ENCODE measurements at regions of chr4 and their contacts with region 1.

Region 1: DNA sequence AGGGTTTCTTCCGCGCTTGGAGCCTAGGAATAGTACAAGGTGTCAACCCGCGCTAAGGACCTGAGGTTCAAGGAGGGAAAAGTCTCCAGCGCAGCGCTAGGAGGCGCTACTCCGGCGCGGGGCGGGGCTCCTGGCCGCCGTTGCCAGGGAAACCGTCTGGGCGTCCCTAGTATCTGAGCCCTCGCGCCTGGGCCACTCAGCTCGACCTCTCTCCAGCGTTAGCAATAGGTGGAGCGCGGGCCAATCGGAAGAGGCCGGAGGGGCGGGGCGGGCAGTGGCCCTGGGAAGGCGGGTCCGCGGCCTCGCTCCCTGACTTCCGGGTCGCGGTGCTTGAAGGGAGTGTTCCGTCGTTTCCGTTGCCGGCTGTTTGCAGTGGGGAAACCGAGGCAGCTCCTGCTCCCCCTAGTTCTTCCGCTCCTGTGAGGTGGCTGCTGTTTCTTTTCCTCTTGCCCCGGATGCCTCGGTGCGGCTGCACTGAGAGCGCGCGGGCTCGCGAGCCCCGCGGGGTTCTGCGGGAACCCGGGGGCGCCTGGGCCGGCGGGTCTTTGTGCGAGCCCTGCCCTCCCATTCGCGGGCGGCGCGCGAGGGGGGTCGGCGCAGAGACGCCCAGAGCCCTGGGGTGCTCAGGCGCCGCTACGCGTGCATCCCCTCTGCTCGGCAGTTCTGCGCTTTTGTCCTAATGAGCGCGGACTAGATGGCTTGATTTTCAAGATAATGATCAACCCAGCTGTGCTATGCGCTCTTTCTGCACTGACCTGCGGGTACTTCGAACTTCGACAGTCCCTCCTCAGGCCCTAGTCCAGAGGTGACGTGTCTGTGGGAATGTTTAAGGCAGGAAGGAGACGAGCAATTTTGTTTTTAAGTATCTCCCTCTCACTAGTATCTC is at the start of gene ELMOD2:
- DNase-seq: peak; percentile 95 to 98 (median 97)
- ATAC-seq: peak; percentile 100
- H3K4me3 ChIP-seq: peak within 1 kb of the TSS; percentile 70
- H3K4me3 Mint-ChIP-seq: peak within 1 kb of the TSS; percentile 78 to 95 (median 88)
- H3K27ac ChIP-seq: peak within 1 kb of the TSS; percentile 71
- H3K27ac Mint-ChIP-seq: peak within 1 kb of the TSS; percentile 78 to 93 (median 86)
- H3K4me1 ChIP-seq: peaks cover 12 to 18% of the 10 kb centered on the region in 2 donors
- H3K4me1 Mint-ChIP-seq: peaks cover 8 to 39% (median 29%) of the 10 kb centered on the region in 7 donors
- H3K27me3 ChIP-seq: no peaks in the 10 kb centered on the region
- H3K27me3 Mint-ChIP-seq: peaks cover 0 to 3% (median 0%) of the 10 kb centered on the region in 5 donors
- total RNA-seq, gene ELMOD2: 12.8 to 29.2 (median 17.7) TPM

Region 2: GRCh38 chr4:139177868-139178611 is 1346.1 kb before region 1 on chr4:
- CTCF ChIA-PET with region 1: no interaction called
- POLR2A ChIA-PET with region 1: no interaction called
- intact Hi-C with region 1: loop called (anchors 1 to 2 kb)
- DNase-seq: peak; percentile 84 to 98 (median 92)
- ATAC-seq: peak; percentile 84
- H3K4me3 ChIP-seq: peak overlapping the region; percentile 71
- H3K4me3 Mint-ChIP-seq: peak overlapping the region; percentile 86 to 95 (median 91)
- H3K27ac ChIP-seq: peak overlapping the region; percentile 86
- H3K27ac Mint-ChIP-seq: peak overlapping the region; percentile 90 to 97 (median 94)
- H3K4me1 ChIP-seq: peaks cover 0 to 11% of the 10 kb centered on the region in 2 donors
- H3K4me1 Mint-ChIP-seq: peaks cover 0 to 31% (median 17%) of the 10 kb centered on the region in 7 donors
- H3K27me3 ChIP-seq: no peaks in the 10 kb centered on the region
- H3K27me3 Mint-ChIP-seq: peaks cover 0 to 44% (median 0%) of the 10 kb centered on the region in 5 donors

Region 3: DNA sequence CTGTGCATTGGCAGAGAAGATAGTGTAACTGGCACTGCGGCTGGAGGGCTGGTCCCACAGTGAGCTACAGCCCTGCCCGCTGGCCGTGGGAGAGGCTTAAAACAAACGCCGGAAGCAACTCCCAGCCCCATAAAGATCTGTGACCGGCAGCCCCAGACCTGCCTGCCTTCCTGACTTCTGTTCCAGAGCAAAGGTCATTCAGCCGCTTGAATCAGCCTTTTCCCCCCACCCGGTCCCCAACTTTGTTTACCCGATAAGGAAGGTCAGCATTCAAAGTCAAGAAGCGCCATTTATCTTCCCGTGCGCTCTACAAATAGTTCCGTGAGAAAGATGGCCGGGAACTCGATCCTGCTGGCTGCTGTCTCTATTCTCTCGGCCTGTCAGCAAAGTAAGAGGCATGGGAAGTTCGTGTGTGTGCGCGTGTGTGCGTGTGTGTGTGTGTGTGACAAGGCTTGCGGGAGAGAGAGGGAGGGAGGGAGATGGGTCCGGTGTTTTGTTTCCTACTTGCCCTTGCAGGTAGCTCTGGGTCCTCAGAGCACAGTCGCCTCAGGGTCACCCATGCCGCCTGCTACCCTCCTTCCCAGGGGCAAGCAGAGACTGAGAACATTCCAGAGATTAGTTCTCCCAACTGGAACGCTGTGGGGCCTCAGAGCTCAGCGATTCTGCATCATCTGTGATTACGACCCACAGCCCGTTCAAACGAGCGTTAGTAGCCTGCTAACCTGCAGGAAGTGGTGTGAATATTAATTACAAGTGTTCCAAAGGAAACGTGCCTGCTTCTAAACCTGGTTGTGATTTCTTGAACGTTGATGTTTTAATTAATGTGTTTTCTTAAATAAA is 858.2 kb before region 1 on chr4 and contains the start of gene MGST2:
- CTCF ChIA-PET with region 1: no interaction called
- POLR2A ChIA-PET with region 1: no interaction called
- intact Hi-C with region 1: loop called in 1 of 2 experiments (anchors 5 kb)
- DNase-seq: peak in 5 of 9 donors; percentile 17 to 51 (median 27)
- ATAC-seq: peak; percentile 61
- H3K4me3 ChIP-seq: peak within 1 kb of the TSS; percentile 64
- H3K4me3 Mint-ChIP-seq: peak within 1 kb of the TSS; percentile 90 to 99 (median 94)
- H3K27ac ChIP-seq: peak within 1 kb of the TSS; percentile 42
- H3K27ac Mint-ChIP-seq: peak within 1 kb of the TSS; percentile 49 to 95 (median 88)
- H3K4me1 ChIP-seq: peaks cover 0 to 9% of the 10 kb centered on the region in 2 donors
- H3K4me1 Mint-ChIP-seq: peaks cover 15 to 44% (median 19%) of the 10 kb centered on the region in 7 donors
- H3K27me3 ChIP-seq: no peaks in the 10 kb centered on the region
- H3K27me3 Mint-ChIP-seq: no peaks in the 10 kb centered on the region
- total RNA-seq, gene MGST2: 1.4 to 37.3 (median 1.9) TPM

Region 4: DNA sequence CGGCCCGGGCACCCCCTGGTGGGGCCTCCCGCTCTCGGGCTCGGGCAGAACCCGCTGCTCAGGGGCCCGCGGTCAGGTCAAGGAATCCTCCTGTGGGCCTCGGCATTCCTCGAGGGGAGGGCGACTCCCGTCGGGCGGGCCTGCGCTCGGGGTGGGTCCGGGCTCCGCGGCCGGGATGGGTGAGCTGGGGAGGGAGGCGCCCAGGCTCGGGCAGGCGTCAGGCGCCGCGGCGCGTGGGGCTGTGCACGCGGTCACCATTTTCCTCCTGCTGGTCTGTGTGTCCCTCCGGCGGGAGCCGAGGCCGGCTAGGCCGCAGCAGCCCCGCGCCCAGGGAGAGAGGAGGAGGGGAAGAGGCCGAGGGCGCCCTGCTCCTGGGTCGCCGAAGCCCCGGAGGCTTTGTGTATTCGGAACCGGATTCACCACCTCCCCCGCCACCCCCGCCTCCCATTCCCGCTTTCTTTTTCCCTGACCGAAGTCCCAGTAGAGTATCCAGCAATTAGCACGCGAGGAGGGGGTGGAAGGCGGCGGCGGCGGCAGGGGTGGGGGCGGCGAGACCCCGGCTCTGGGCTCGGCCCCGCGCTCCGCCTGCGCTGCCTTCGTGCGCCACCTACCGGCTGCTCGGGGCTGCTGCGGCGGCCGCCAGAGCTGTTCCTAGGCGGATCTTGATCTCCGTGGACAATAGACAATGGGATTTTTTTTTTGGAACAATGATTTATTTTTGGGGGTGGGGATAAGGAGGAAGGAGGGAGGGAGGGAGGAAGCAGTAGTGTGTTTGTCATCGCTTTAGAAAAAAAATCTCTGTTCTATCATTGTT is 271.2 kb before region 1 on chr4:
- CTCF ChIA-PET with region 1: no interaction called
- POLR2A ChIA-PET with region 1: no interaction called
- intact Hi-C with region 1: loop called in 1 of 2 experiments (anchors 5 kb)
- DNase-seq: peak; percentile 29 to 78 (median 60)
- ATAC-seq: peak; percentile 78
- H3K4me3 ChIP-seq: peak overlapping the region; percentile 44
- H3K4me3 Mint-ChIP-seq: peak overlapping the region; percentile 42 to 85 (median 80)
- H3K27ac ChIP-seq: peak overlapping the region; percentile 29
- H3K27ac Mint-ChIP-seq: peak overlapping the region in 2 of 9 donors; percentile 30 to 33
- H3K4me1 ChIP-seq: no peaks in the 10 kb centered on the region
- H3K4me1 Mint-ChIP-seq: peaks cover 2 to 31% (median 11%) of the 10 kb centered on the region in 7 donors
- H3K27me3 ChIP-seq: peaks cover 0 to 7% of the 10 kb centered on the region in 2 donors
- H3K27me3 Mint-ChIP-seq: peaks cover 0 to 19% (median 3%) of the 10 kb centered on the region in 5 donors

Region 5: GRCh38 chr4:140395668-140396067 is 128.4 kb before region 1 on chr4:
- CTCF ChIA-PET with region 1: no interaction called
- POLR2A ChIA-PET with region 1: no interaction called
- intact Hi-C with region 1: no loop called
- DNase-seq: no peak
- ATAC-seq: no peak
- H3K4me3 ChIP-seq: no peak overlapping the region
- H3K4me3 Mint-ChIP-seq: no peak overlapping the region
- H3K27ac ChIP-seq: no peak overlapping the region
- H3K27ac Mint-ChIP-seq: no peak overlapping the region
- H3K4me1 ChIP-seq: no peaks in the 10 kb centered on the region
- H3K4me1 Mint-ChIP-seq: no peaks in the 10 kb centered on the region
- H3K27me3 ChIP-seq: no peaks in the 10 kb centered on the region
- H3K27me3 Mint-ChIP-seq: peaks cover 10 to 18% (median 16%) of the 10 kb centered on the region in 5 donors

Region 6: DNA sequence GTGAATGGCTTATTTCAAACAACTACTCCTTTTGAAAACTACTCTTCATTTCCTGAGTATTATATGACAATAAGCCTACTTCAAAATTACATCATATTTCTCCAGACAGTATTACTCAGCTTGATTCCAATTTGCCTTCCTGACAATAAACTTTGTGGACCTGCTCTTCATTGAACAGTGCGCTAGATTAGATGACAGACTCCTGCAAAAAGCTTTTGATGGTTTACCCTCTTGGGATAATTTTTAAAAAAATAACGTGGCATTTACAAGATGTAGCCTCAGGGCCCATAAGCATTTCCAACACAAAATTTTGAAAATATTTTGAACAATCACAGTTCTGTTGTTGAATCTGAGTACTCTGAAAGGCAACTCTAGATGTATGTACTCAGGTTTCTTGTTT is 51.9 kb before region 1 on chr4:
- CTCF ChIA-PET with region 1: no interaction called
- POLR2A ChIA-PET with region 1: no interaction called
- intact Hi-C with region 1: no loop called
- DNase-seq: no peak
- ATAC-seq: no peak
- H3K4me3 ChIP-seq: no peak overlapping the region
- H3K4me3 Mint-ChIP-seq: no peak overlapping the region
- H3K27ac ChIP-seq: no peak overlapping the region
- H3K27ac Mint-ChIP-seq: no peak overlapping the region
- H3K4me1 ChIP-seq: no peaks in the 10 kb centered on the region
- H3K4me1 Mint-ChIP-seq: no peaks in the 10 kb centered on the region
- H3K27me3 ChIP-seq: no peaks in the 10 kb centered on the region
- H3K27me3 Mint-ChIP-seq: peaks cover 22 to 46% (median 31%) of the 10 kb centered on the region in 5 donors

Region 7: DNA sequence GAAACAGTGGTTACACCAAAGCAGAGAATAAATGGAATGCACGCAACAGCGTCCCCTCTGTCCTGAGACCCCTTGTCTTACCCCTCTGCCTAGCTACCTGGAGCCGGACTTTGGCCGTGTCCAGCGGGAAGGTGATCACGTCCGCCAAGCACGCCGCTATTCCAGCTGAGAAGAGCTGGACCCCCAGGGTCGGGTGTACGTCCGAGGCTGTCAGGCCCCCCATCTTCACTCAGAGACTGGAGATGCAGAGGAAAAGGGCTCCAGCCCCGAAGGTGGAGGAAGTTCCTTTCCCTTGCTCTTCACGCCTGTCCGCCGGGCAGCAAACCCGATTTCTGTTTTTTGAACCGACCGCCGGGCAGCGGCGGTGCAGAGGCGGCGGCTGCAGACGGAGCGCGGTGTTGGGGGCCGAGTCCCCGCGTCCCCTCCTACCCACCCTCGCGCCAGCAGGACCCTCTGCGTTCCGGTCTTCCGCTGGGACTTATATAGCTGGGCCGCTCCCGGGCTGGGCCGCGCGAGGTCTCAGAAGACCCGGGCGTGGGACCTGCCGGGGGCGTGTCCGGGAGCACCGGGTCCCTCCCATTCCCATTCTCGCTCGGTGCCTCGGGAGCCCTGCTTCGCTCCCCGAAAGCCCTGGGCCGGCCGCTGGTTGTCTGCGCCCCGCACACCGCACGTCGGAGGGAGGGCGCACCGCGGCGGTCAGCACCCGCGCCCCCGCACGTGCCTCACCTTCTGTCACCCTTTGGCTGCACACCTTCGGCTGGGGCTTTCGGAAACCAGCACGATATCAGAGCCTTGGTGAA is 44.6 kb after region 1 on chr4 and contains the start of gene UCP1:
- CTCF ChIA-PET with region 1: no interaction called
- POLR2A ChIA-PET with region 1: no interaction called
- intact Hi-C with region 1: loop called in 1 of 2 experiments (anchors 1 kb)
- DNase-seq: peak in 1 of 9 donors; percentile 9
- ATAC-seq: no peak
- H3K4me3 ChIP-seq: peak within 1 kb of the TSS; percentile 17
- H3K4me3 Mint-ChIP-seq: peak within 1 kb of the TSS; percentile 65 to 91 (median 78)
- H3K27ac ChIP-seq: no peak within 1 kb of the TSS
- H3K27ac Mint-ChIP-seq: peak within 1 kb of the TSS in 1 of 9 donors; percentile 59
- H3K4me1 ChIP-seq: peaks cover 0 to 3% of the 10 kb centered on the region in 2 donors
- H3K4me1 Mint-ChIP-seq: peaks cover 6 to 28% (median 17%) of the 10 kb centered on the region in 7 donors
- H3K27me3 ChIP-seq: peaks cover 5 to 19% of the 10 kb centered on the region in 2 donors
- H3K27me3 Mint-ChIP-seq: peaks cover 34 to 59% (median 51%) of the 10 kb centered on the region in 5 donors
- total RNA-seq, gene UCP1: not detected

Region 8: DNA sequence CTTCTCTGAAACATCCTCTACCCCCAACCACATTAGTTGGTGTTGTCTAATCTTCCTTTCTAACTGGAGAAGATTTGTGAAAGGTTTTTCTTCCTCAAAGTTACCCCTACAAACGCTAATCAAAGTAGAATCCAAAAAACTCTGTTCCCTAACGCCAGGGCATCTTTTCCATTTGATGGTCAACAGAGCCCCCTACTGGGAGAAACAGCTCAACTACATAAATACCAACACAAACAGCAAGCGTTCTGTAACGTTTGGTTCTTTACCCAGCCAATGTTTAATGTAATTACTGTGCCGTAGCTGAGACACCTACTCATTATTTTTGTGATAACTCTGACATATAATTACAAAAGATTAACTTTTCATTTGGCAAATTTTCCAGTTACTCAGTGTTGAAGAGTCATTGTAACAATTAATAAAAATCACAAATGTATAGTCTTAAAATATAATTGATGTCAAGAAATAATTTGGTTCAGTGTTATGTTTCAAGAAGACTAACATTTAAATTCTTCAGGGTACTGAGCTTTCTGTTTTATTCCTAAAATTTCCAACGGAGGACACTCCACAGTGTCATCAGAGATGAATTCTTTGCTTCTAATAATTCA is 327.0 kb after region 1 on chr4:
- CTCF ChIA-PET with region 1: no interaction called
- POLR2A ChIA-PET with region 1: no interaction called
- intact Hi-C with region 1: loop called in 1 of 2 experiments (anchors 5 kb)
- DNase-seq: peak in 1 of 9 donors; percentile 5
- ATAC-seq: peak; percentile 54
- H3K4me3 ChIP-seq: no peak overlapping the region
- H3K4me3 Mint-ChIP-seq: no peak overlapping the region
- H3K27ac ChIP-seq: no peak overlapping the region
- H3K27ac Mint-ChIP-seq: no peak overlapping the region
- H3K4me1 ChIP-seq: no peaks in the 10 kb centered on the region
- H3K4me1 Mint-ChIP-seq: peaks cover 0 to 2% (median 0%) of the 10 kb centered on the region in 7 donors
- H3K27me3 ChIP-seq: no peaks in the 10 kb centered on the region
- H3K27me3 Mint-ChIP-seq: peaks cover 20 to 56% (median 42%) of the 10 kb centered on the region in 5 donors

Region 9: DNA sequence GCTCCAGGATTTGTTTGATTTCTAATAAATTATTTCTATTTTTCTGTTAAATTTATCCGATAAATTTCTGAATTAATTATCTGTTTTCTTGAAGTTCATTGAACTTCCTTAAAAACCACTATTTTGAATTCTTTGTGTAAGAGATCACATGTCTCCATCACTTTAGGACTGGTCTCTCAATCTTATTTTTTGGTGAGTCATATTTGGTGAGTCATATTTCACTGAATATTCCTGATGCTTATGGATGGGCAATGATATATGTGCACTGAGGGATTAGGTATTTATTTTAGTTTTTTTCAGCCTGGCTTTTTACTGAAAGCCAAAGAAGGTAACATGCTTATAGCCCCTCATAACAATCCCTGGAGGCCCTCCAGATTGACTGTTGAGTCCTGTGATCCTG is 1063.8 kb after region 1 on chr4:
- CTCF ChIA-PET with region 1: no interaction called
- POLR2A ChIA-PET with region 1: no interaction called
- intact Hi-C with region 1: no loop called
- DNase-seq: no peak
- ATAC-seq: no peak
- H3K4me3 ChIP-seq: no peak overlapping the region
- H3K4me3 Mint-ChIP-seq: no peak overlapping the region
- H3K27ac ChIP-seq: no peak overlapping the region
- H3K27ac Mint-ChIP-seq: no peak overlapping the region
- H3K4me1 ChIP-seq: no peaks in the 10 kb centered on the region
- H3K4me1 Mint-ChIP-seq: no peaks in the 10 kb centered on the region
- H3K27me3 ChIP-seq: no peaks in the 10 kb centered on the region
- H3K27me3 Mint-ChIP-seq: peaks cover 0 to 6% (median 0%) of the 10 kb centered on the region in 5 donors

Measured in naive thymus-derived CD4-positive, alpha-beta T cell (primary cell).